K562 (cell line): ENCODE measurements at regions of chr11 and their contacts with region 1.

Region 1: DNA sequence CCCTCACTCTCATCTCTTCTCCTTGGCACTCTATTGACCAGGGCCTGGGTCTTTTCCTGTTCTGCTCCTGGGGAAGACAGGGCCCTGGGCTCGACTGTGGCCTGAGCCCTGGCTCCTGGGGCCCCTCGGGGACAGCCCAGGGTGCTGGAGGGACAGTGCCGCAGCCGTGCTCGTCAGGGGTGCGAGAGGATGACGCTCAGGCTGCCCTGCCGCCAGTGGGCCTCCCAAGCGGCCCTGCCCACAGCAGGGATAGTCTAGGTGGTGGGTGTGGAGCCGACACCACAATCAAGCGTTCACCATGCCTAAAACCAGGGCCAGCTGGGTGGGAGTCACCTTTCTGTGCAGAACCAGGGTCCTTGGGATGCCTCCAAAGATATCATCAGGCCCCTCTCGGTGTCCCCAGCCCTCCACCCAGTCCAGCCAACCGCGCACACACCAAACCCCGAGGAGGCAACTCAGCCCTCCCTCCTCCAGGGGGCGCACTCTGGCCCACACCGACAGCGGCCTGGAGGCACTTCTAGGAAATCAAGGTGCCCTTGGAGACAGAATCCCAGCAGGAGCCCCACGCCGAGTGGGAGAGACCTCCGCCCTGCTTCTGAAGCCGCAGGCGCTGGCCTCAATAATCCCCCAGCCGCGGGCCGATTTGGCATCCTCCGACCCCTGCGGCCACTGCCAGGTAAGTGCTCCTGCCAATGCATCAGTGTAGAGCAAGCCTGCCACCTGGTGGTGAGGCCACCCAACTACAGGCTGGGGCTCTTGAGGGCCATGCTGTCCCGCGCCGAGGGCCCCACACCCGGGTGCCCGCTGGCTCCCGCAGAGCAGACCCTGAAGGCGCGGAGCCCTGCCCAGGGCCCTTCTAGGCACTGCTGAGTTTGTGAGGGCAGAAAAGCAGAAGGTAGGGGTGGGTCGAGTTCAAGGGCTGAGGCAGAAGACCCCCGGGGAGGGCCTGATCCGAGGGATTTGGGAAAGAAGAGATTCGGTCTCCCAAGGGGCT is 496.4 kb downstream of the BUD13 start:
- DNase-seq: peak; percentile 79 to 86 (median 84)
- ATAC-seq: peak; percentile 98
- H3K4me3 ChIP-seq: peak overlapping the region; percentile 62
- H3K27ac ChIP-seq: no peak overlapping the region; the same call in 2 of the 3 replicates
- H3K4me1 ChIP-seq: peaks cover 0 to 13% of the 10 kb centered on the region in 2 experiments; a peak in 2 of 5 replicates
- H3K27me3 ChIP-seq: no peaks in the 10 kb centered on the region; a peak in 1 of 5 replicates
- CTCF ChIP-seq: peak in 2 of 3 experiments; percentile 92 to 96
- EP300 ChIP-seq: peak; percentile 10; the same call in 1 of the 2 replicates
- POLR2A ChIP-seq: no peak
- RAD21 ChIP-seq: peak; percentile 85 to 87

Region 2: DNA sequence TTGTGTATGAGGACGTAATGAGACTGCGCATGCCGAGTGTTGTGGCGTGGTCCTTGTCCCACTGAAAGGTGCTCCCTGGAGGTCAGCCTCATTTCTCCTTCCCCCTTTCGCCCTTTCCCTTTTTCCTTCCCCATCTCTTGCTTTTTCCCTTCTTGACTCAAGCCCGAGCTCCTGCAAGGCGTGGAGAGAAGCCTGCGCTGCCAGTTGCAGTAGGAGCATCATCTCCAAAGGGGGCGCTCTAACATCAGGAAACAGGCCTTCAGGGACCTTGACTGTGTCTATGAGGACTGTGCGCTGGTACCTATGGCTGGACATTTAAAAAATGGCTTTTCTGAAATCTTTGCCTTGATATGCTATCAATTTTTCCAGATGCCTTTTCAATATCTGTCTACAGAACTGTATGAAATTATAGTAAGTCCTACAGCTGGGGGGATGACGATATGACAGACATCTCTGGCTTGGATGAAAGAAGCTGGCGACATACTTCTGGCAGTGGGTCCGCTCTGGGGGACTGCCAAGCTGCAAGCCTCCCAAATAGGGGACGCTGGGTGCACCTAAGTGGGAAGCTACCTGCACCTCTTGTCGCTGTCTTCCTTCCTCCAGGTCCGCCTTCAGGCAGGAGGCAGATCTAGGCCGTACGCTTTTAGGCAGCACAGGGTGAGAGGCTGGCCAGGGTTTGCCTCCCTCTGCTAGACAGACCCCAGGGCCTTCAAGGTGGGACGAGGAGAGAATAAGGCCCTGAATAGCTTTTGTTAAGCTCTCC is 1501.6 kb before region 1 on chr11:
- CTCF ChIA-PET with region 1: no interaction called
- POLR2A ChIA-PET with region 1: no interaction called
- in situ Hi-C with region 1: loop called (anchors 10 kb)
- intact Hi-C with region 1: loop called (anchors 1 kb)
- DNase-seq: peak; percentile 59 to 72 (median 69)
- ATAC-seq: peak; percentile 99
- H3K4me3 ChIP-seq: no peak overlapping the region
- H3K27ac ChIP-seq: no peak overlapping the region
- H3K4me1 ChIP-seq: no peaks in the 10 kb centered on the region; a peak in 1 of 5 replicates
- H3K27me3 ChIP-seq: peaks cover 0 to 6% of the 10 kb centered on the region in 2 experiments; a peak in 1 of 5 replicates
- CTCF ChIP-seq: peak; percentile 76 to 91 (median 85)
- EP300 ChIP-seq: no peak
- POLR2A ChIP-seq: no peak
- RAD21 ChIP-seq: peak; percentile 63 to 79

Region 3: DNA sequence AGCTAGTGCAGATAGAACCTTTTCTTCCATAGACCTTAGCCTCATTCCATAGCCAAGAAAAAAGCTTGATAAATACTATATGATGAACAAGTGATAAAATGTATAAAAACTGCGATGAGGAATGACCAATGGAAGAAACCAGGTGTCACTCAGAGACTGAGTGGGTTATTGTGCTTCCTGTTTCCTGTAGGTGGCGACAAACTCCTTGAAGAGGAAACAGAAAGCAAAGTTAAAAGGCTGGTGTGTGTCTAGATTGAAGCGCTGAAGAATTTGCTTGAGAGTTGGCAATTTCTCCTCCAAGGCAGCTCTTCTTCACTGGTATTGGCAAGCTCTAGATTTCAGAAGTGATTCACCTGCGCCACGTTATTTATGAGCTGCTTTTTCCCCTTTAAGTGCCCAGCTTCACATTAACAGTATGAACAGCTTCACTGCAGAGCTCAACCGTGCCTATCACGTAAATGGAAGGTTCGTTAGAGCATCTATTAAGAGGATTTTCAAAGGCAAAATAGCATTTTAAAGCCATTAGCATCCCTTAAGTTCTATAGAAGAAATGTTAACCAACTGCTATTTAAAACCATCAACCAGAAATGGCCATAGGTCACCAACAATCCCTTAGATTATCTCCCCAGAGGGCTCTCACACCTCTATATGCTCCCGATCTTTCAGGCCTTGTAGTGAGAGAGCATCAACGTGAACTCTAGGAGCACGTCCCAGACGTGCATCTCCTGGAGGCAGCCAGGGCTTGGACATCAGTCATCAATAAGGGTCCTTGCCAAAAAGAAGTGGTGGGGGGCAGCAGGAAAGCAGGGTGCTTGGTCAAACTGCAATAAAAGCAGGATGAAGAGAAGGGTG is 951.5 kb before region 1 on chr11:
- CTCF ChIA-PET with region 1: interaction called, 8 read pairs
- POLR2A ChIA-PET with region 1: no interaction called
- in situ Hi-C with region 1: loop called (anchors 10 kb)
- intact Hi-C with region 1: loop called (anchors 2 kb)
- DNase-seq: peak; percentile 34 to 49 (median 44)
- ATAC-seq: peak; percentile 92
- H3K4me3 ChIP-seq: no peak overlapping the region
- H3K27ac ChIP-seq: no peak overlapping the region
- H3K4me1 ChIP-seq: no peaks in the 10 kb centered on the region
- H3K27me3 ChIP-seq: no peaks in the 10 kb centered on the region
- CTCF ChIP-seq: peak; percentile 65 to 85 (median 70)
- EP300 ChIP-seq: no peak
- POLR2A ChIP-seq: no peak
- RAD21 ChIP-seq: peak; percentile 72 to 74

Region 4: GRCh38 chr11:115334932-115335788 is 941.2 kb before region 1 on chr11:
- CTCF ChIA-PET with region 1: interaction called, 5 read pairs
- POLR2A ChIA-PET with region 1: no interaction called
- in situ Hi-C with region 1: loop called (anchors 10 kb)
- intact Hi-C with region 1: loop called (anchors 1 kb)
- DNase-seq: peak; percentile 14 to 20 (median 16)
- ATAC-seq: no peak
- H3K4me3 ChIP-seq: no peak overlapping the region
- H3K27ac ChIP-seq: no peak overlapping the region
- H3K4me1 ChIP-seq: no peaks in the 10 kb centered on the region
- H3K27me3 ChIP-seq: no peaks in the 10 kb centered on the region
- CTCF ChIP-seq: peak in 2 of 3 experiments; percentile 32 to 61; a peak in 3 of 6 replicates
- EP300 ChIP-seq: no peak
- POLR2A ChIP-seq: no peak
- RAD21 ChIP-seq: peak; percentile 60 to 64

Region 5: GRCh38 chr11:116217006-116217405 is 59.3 kb before region 1 on chr11:
- CTCF ChIA-PET with region 1: interaction called, 4 read pairs
- POLR2A ChIA-PET with region 1: no interaction called
- in situ Hi-C with region 1: no loop called
- intact Hi-C with region 1: loop called (anchors 1 kb)
- DNase-seq: peak; percentile 20 to 55 (median 36)
- ATAC-seq: peak; percentile 89
- H3K4me3 ChIP-seq: no peak overlapping the region
- H3K27ac ChIP-seq: no peak overlapping the region
- H3K4me1 ChIP-seq: no peaks in the 10 kb centered on the region
- H3K27me3 ChIP-seq: peaks cover 0 to under 1% of the 10 kb centered on the region in 2 experiments; a peak in 2 of 5 replicates
- CTCF ChIP-seq: peak; percentile 72 to 79 (median 77)
- EP300 ChIP-seq: no peak
- POLR2A ChIP-seq: no peak
- RAD21 ChIP-seq: peak in 1 of 2 experiments; percentile 55; a peak in 3 of 4 replicates